Naive thymus-derived CD4-positive, alpha-beta T cell (primary cell): ENCODE measurements at regions of chr6 and their contacts with region 1.

Region 1: GRCh38 chr6:27795697-27796494 is 116.3 kb downstream of the OR2B2 start:
- DNase-seq: peak in 8 of 9 donors; percentile 36 to 83 (median 78)
- ATAC-seq: peak; percentile 86
- H3K4me3 ChIP-seq: no peak overlapping the region
- H3K4me3 Mint-ChIP-seq: peak overlapping the region in 2 of 10 donors; percentile 30 to 42
- H3K27ac ChIP-seq: no peak overlapping the region
- H3K27ac Mint-ChIP-seq: peak overlapping the region in 6 of 9 donors; percentile 11 to 86 (median 38)
- H3K4me1 ChIP-seq: peaks cover 14 to 24% of the 10 kb centered on the region in 2 donors
- H3K4me1 Mint-ChIP-seq: peaks cover 12 to 49% (median 22%) of the 10 kb centered on the region in 7 donors
- H3K27me3 ChIP-seq: no peaks in the 10 kb centered on the region
- H3K27me3 Mint-ChIP-seq: peaks cover 7 to 13% (median 12%) of the 10 kb centered on the region in 5 donors

Region 2: DNA sequence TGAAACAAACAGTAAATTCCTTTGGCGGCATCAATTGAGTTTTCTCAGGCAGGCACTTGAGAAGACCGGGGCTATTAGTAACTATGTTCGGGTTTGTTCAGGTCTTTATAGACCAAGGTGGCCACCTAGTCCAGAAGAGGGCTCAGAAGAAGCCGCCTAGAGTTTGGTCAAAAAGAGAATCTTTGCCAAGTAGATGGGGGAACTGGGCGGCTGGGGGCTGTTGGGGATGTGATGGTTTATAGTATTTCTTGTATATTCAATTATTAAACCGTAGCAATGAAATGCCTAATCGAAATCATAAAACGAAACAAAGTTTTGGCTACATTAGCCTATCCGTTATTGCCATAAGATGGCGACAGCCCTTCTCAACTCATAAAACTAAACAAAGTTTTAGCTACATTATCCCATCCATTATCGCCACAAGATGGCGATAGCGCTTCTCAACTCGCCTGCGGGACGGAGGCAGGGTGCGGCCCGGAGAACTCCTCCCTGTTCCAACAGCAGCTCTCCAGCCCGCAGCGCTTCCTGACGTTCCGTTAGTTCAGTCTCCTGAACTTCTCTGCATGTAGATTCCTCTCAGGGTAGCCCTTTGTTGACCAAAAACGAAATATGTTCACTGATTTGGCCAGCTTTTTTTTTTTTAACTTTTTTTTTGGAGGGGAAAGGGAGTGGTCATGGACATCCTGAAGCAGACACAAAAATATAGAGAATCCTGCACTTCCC is 668.9 kb before region 1 on chr6:
- CTCF ChIA-PET with region 1: interaction called, 7 read pairs
- POLR2A ChIA-PET with region 1: interaction called, 8 read pairs
- intact Hi-C with region 1: loop called in 1 of 2 experiments (anchors 1 kb)
- DNase-seq: peak; percentile 46 to 82 (median 77)
- ATAC-seq: peak; percentile 89
- H3K4me3 ChIP-seq: peak overlapping the region; percentile 33
- H3K4me3 Mint-ChIP-seq: peak overlapping the region; percentile 35 to 90 (median 77)
- H3K27ac ChIP-seq: no peak overlapping the region
- H3K27ac Mint-ChIP-seq: peak overlapping the region; percentile 41 to 93 (median 82)
- H3K4me1 ChIP-seq: peaks cover 4 to 6% of the 10 kb centered on the region in 2 donors
- H3K4me1 Mint-ChIP-seq: peaks cover 6 to 51% (median 15%) of the 10 kb centered on the region in 7 donors
- H3K27me3 ChIP-seq: no peaks in the 10 kb centered on the region
- H3K27me3 Mint-ChIP-seq: no peaks in the 10 kb centered on the region

Region 3: DNA sequence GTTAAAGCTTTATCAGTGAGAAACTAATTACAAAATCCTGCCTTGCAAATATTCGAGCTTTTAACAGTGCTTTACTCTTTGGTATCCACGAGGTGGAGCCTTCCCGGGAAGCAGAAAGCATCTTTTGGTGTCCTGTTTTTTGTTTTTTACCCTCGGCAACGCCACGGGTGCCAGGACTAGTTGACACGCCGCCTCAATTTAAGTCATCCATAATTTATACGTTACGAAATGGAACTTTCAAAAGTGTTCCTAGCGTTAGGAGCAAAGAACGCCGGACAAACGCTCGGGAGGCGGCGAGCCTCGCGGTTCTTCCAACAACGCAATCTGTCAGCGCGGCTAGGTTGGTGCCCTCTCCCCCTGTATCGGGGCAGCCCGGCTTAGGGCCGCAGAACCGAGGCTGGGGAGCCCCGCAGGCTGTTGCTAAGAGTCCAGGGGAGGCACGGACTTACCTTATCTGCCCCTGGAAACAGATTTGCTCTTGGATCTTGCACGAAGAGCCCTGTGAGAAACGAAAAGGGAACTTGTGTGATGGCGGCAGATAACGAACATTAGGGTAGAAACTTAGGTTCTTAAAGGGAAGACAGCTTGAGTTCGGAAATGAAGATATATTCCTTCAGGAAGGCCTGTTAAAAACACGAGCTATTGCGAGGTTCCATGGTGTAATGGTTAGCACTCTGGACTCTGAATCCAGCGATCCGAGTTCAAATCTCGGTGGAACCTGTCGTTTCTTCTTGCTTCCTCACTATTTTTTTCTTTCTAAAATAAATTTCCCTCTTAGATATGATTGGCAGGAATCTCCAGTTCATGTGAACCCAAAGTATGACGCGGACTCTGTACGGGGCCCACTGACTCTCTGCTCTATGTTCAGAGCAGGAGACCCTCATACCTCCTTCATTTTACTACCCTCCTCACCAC is 276.8 kb before region 1 on chr6:
- CTCF ChIA-PET with region 1: interaction called, 8 read pairs
- POLR2A ChIA-PET with region 1: no interaction called
- intact Hi-C with region 1: loop called in 1 of 2 experiments (anchors 1 kb)
- DNase-seq: peak; percentile 34 to 79 (median 68)
- ATAC-seq: peak; percentile 81
- H3K4me3 ChIP-seq: peak overlapping the region; percentile 96
- H3K4me3 Mint-ChIP-seq: peak overlapping the region; percentile 84 to 97 (median 91)
- H3K27ac ChIP-seq: peak overlapping the region; percentile 67
- H3K27ac Mint-ChIP-seq: peak overlapping the region; percentile 68 to 94 (median 84)
- H3K4me1 ChIP-seq: peaks cover 7 to 11% of the 10 kb centered on the region in 2 donors
- H3K4me1 Mint-ChIP-seq: peaks cover 0 to 31% (median 18%) of the 10 kb centered on the region in 7 donors
- H3K27me3 ChIP-seq: peaks cover 0 to 3% of the 10 kb centered on the region in 2 donors
- H3K27me3 Mint-ChIP-seq: peaks cover 0 to 40% (median 22%) of the 10 kb centered on the region in 5 donors

Region 4: DNA sequence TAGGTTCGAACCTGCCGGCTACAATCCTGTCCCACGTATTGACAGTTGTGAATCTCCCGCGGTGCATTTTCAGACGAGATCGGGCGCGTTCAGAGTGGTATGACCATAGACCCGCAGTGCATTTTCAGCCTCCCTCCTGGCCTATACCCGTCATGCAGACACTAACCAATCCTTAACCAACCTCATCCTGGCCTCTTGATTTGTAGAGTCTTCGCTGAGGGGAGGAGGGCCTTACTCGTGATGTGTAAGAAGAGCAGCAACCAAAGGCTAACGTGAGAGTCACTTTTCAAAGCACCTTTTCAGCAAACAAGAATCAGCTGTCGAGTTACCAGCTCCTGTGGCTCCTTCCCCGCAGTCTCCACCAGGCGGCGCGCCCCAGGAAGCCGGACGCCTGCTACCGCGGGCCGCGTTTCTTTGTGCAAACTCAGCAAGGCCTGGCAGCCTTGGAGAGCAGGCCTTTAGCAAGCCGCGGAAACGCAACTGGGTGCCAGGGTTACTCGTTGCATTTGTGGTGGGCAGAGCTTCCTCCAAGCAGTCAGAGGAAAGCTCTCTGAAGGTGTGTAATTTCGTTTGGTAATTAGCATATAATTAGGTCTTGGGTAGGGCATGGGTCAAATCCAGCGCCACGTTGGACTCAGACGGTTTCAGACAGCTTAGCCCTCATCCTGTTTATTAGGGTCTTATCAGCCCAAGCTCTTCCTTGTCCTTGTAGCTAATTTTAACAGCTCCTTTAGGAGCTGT is 23.5 kb before region 1 on chr6:
- CTCF ChIA-PET with region 1: interaction called, 61 read pairs
- POLR2A ChIA-PET with region 1: interaction called, 3 read pairs
- intact Hi-C with region 1: loop called (anchors 1 kb)
- DNase-seq: peak; percentile 72 to 88 (median 82)
- ATAC-seq: peak; percentile 98
- H3K4me3 ChIP-seq: no peak overlapping the region
- H3K4me3 Mint-ChIP-seq: peak overlapping the region in 6 of 10 donors; percentile 14 to 59 (median 34)
- H3K27ac ChIP-seq: no peak overlapping the region
- H3K27ac Mint-ChIP-seq: peak overlapping the region in 2 of 9 donors; percentile 7 to 8
- H3K4me1 ChIP-seq: peaks cover 3 to 5% of the 10 kb centered on the region in 2 donors
- H3K4me1 Mint-ChIP-seq: peaks cover 6 to 20% (median 7%) of the 10 kb centered on the region in 7 donors
- H3K27me3 ChIP-seq: no peaks in the 10 kb centered on the region
- H3K27me3 Mint-ChIP-seq: peaks cover 1 to 35% (median 10%) of the 10 kb centered on the region in 5 donors

Region 5: DNA sequence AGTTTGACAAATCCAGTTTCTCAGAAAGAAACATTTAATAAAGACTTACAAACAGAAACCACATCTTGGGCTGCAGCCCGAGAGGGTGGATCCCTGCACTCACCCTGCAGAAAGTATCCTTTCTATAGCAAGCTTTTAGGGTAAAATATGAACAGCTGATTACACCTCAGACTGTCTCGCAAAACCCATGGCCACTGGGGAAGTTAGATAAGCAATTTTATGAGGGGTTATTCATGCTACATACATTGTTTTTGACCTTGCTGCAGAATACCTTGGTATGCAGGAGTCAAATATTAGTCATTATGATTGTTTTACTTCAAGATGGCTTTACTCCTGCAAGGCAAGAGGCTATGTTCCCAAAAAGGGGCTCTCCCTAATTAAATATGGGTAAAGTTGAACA is 10.6 kb before region 1 on chr6:
- CTCF ChIA-PET with region 1: interaction called, 10 read pairs
- POLR2A ChIA-PET with region 1: interaction called, 3 read pairs
- intact Hi-C with region 1: no loop called
- DNase-seq: no peak
- ATAC-seq: no peak
- H3K4me3 ChIP-seq: no peak overlapping the region
- H3K4me3 Mint-ChIP-seq: no peak overlapping the region
- H3K27ac ChIP-seq: no peak overlapping the region
- H3K27ac Mint-ChIP-seq: no peak overlapping the region
- H3K4me1 ChIP-seq: no peaks in the 10 kb centered on the region
- H3K4me1 Mint-ChIP-seq: peaks cover 0 to 3% (median 0%) of the 10 kb centered on the region in 7 donors
- H3K27me3 ChIP-seq: no peaks in the 10 kb centered on the region
- H3K27me3 Mint-ChIP-seq: peaks cover 11 to 37% (median 20%) of the 10 kb centered on the region in 5 donors